AG04450 (cell line): ENCODE measurements at regions of chr14 and their contacts with region 1.

Region 1: DNA sequence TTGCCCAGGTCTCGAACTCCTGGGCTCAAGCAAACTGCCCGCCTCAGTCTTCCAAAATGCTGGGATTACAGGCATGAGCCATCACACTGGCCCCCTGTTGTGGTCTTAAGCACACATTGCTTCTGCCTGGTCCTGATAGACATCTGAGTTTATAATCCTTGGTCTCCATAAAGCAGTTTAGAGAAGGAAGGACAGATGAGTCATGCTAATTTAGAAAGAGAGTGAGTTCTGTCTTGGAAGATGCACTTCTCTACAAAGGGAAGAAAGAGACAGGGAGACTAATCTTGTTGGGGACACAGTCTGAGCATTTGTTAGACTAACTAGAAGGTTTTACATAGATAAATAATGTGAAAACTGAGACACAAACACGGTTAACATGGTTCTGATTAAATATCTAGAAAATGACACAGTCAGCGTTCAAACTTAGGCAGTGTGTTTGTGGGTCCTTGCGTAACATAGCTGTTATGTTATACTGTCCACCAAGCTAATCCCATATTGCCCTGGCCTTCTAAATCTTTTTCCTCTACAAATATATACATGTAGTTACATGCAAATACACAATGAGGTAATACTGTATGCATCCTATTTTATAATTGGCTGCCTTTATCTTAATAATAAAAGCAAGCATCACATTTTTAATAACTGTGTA is 31.0 kb downstream of the SAMD4A start:
- DNase-seq: no peak
- H3K4me3 ChIP-seq: no peak overlapping the region
- H3K27ac ChIP-seq: no peak overlapping the region
- H3K27me3 ChIP-seq: no peaks in the 10 kb centered on the region
- CTCF ChIP-seq: no peak

Region 2: GRCh38 chr14:54572316-54572715 is 25.6 kb before region 1 on chr14:
- CTCF ChIA-PET with region 1: interaction called, 10 read pairs
- POLR2A ChIA-PET with region 1: interaction called, 4 read pairs
- DNase-seq: no peak
- H3K4me3 ChIP-seq: no peak overlapping the region
- H3K27ac ChIP-seq: no peak overlapping the region
- H3K27me3 ChIP-seq: no peaks in the 10 kb centered on the region
- CTCF ChIP-seq: peak; percentile 46

Region 3: DNA sequence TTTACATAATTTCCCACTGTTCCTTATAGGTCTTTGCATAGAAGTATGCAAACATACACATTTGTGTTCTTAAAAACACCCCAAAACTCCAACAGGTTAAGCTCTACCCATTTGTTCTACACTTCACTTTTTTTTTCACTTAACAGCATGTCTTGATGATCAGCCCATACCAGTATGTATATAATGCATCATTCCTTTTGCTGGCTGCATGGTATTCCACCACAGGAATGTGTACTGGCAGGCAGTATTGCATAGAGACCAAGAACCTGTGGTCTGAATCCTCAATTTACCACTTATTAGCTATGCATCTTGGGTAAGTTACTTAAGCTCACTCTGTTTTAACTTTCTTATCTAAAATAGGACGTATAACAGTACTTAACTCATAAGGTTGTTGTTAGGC is 34.5 kb after region 1 on chr14:
- CTCF ChIA-PET with region 1: no interaction called
- POLR2A ChIA-PET with region 1: no interaction called
- DNase-seq: no peak
- H3K4me3 ChIP-seq: no peak overlapping the region
- H3K27ac ChIP-seq: no peak overlapping the region
- H3K27me3 ChIP-seq: no peaks in the 10 kb centered on the region
- CTCF ChIP-seq: no peak

Region 4: GRCh38 chr14:54754623-54755386 is 156.9 kb after region 1 on chr14:
- CTCF ChIA-PET with region 1: no interaction called
- POLR2A ChIA-PET with region 1: no interaction called
- DNase-seq: no peak
- H3K4me3 ChIP-seq: no peak overlapping the region
- H3K27ac ChIP-seq: no peak overlapping the region
- H3K27me3 ChIP-seq: no peaks in the 10 kb centered on the region
- CTCF ChIP-seq: no peak